PC-3 (cell line): ENCODE measurements at regions of chr19 and their contacts with region 1.

Region 1: DNA sequence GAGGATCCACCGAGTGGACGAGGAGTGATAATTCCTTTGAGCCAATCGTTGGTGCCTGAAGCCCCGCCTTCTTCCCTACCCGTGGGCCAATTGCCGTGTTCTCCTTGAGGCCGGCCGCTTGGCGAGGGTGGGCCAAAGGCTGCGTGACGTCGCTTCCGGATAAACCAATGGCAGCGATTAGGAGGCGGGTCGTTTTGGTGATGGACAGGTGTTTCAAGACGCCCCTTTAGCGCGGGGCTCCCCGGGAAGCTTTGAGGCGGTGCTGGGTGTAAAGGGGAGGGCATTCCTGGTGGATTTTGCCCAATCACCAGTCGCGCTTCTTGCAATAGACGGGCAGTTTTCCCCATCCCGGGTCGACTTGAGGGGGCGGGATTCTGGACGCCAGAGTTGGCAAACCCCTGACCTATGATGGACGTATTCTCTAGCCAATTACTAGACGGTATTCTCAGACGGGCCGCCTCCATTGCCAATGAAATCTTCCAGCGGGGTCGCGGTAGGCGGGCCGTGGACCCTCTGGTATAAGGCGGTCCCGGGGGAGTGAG is 310 bp upstream of the PRMT1 start:
- DNase-seq: peak; percentile 100
- ATAC-seq: peak; percentile 77
- H3K4me3 ChIP-seq: peak overlapping the region; percentile 86
- H3K27ac ChIP-seq: peak overlapping the region; percentile 80
- H3K4me1 ChIP-seq: peaks cover 25% of the 10 kb centered on the region
- H3K27me3 ChIP-seq: no peaks in the 10 kb centered on the region
- CTCF ChIP-seq: no peak

Region 2: GRCh38 chr19:49468746-49469447 is 207.9 kb before region 1 on chr19:
- CTCF ChIA-PET with region 1: no interaction called
- POLR2A ChIA-PET with region 1: no interaction called
- intact Hi-C with region 1: no loop called
- DNase-seq: peak; percentile 77
- ATAC-seq: peak; percentile 75
- H3K4me3 ChIP-seq: no peak overlapping the region
- H3K27ac ChIP-seq: no peak overlapping the region
- H3K4me1 ChIP-seq: no peaks in the 10 kb centered on the region
- H3K27me3 ChIP-seq: no peaks in the 10 kb centered on the region
- CTCF ChIP-seq: no peak

Region 3: DNA sequence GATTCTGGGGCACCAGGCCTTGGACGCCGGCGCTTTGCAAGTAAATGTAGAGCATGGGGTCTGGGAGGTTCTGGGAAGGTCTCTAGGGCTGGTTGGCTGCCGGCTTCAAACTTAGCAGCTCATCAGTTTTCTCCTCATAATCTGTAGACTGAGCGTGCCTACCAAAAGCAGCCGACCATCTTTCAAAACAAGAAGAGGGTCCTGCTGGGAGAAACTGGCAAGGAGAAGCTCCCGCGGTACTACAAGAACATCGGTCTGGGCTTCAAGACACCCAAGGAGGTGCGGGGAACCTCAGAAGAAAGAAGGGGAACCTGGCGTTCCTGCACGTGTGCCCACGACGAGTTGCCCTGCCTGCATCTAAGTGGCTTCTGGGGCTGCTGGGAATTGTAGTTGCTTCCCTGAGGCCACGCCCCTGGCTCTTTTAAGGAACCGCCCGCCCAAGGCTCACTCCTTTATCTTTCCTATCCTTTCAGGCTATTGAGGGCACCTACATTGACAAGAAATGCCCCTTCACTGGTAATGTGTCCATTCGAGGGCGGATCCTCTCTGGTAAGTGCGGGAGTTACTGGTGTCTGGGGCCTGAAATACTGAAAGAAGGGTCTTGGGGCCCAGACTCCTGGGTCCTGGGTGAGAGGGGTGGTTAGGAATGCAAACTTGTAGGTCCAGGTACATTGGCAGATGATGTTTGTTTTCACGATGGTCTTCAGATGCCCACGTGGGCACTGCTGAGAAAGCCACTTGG is 179.5 kb before region 1 on chr19:
- CTCF ChIA-PET with region 1: no interaction called
- POLR2A ChIA-PET with region 1: no interaction called
- intact Hi-C with region 1: loop called (anchors 5 kb)
- DNase-seq: peak; percentile 65
- ATAC-seq: no peak
- H3K4me3 ChIP-seq: peak overlapping the region; percentile 94
- H3K27ac ChIP-seq: peak overlapping the region; percentile 72
- H3K4me1 ChIP-seq: peaks cover 19% of the 10 kb centered on the region
- H3K27me3 ChIP-seq: no peaks in the 10 kb centered on the region
- CTCF ChIP-seq: no peak

Region 4: GRCh38 chr19:49590071-49590970 is 86.4 kb before region 1 on chr19:
- CTCF ChIA-PET with region 1: no interaction called
- POLR2A ChIA-PET with region 1: no interaction called
- intact Hi-C with region 1: loop called (anchors 2 kb)
- DNase-seq: peak; percentile 99
- ATAC-seq: peak; percentile 77
- H3K4me3 ChIP-seq: peak overlapping the region; percentile 70
- H3K27ac ChIP-seq: peak overlapping the region; percentile 85
- H3K4me1 ChIP-seq: peaks cover 7% of the 10 kb centered on the region; the same call in 1 of the 2 replicates
- H3K27me3 ChIP-seq: no peaks in the 10 kb centered on the region
- CTCF ChIP-seq: no peak

Region 5: DNA sequence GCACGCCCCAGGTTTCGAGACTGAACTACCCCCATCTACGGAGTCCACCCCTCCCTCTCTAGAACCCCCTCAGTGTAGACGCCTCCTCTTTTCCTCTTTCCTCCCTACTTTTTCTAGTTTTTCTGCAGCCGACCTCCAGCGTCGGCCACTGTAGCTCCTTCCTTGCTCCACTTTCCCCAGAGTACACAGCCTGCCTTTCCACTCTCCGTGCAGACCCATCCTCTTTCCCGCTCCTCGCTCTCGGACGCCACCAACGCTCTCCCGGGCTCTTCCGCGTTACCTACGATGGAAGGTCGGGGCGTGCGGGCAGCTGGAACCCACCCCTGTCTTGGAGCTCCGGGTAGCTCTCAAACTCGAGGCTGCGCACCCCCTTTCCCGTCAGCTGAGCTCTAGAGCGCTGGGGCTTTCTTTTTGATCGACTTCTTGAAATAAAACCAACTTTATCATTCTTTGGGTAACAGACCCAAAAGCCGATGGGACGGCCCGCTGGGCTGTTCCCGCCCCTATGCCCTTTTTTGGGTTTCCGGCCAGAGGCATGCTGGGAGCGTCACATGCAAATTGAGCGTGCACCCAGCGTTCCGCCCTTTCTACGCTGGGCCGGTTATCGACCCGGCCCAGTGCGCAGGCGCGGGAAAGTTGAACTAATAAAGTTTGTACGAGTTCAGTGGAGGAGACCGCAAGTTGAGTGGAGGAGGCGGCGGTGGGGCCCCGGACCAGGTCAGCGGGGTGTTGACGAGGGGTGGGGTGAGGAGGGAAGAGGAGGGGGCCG is 11.2 kb before region 1 on chr19 and contains the starts of genes BCL2L12 and IRF3:
- CTCF ChIA-PET with region 1: no interaction called
- POLR2A ChIA-PET with region 1: no interaction called
- intact Hi-C with region 1: loop called (anchors 1 kb)
- DNase-seq: peak; percentile 100
- ATAC-seq: peak; percentile 80
- H3K4me3 ChIP-seq: peak within 1 kb of the TSS; percentile 89
- H3K27ac ChIP-seq: peak within 1 kb of the TSS; percentile 60
- H3K4me1 ChIP-seq: peaks cover 18% of the 10 kb centered on the region
- H3K27me3 ChIP-seq: no peaks in the 10 kb centered on the region
- CTCF ChIP-seq: no peak
- total RNA-seq, gene BCL2L12: 82.5 and 104 TPM in 2 replicates
- total RNA-seq, gene IRF3: 223 and 236 TPM in 2 replicates

Region 6: DNA sequence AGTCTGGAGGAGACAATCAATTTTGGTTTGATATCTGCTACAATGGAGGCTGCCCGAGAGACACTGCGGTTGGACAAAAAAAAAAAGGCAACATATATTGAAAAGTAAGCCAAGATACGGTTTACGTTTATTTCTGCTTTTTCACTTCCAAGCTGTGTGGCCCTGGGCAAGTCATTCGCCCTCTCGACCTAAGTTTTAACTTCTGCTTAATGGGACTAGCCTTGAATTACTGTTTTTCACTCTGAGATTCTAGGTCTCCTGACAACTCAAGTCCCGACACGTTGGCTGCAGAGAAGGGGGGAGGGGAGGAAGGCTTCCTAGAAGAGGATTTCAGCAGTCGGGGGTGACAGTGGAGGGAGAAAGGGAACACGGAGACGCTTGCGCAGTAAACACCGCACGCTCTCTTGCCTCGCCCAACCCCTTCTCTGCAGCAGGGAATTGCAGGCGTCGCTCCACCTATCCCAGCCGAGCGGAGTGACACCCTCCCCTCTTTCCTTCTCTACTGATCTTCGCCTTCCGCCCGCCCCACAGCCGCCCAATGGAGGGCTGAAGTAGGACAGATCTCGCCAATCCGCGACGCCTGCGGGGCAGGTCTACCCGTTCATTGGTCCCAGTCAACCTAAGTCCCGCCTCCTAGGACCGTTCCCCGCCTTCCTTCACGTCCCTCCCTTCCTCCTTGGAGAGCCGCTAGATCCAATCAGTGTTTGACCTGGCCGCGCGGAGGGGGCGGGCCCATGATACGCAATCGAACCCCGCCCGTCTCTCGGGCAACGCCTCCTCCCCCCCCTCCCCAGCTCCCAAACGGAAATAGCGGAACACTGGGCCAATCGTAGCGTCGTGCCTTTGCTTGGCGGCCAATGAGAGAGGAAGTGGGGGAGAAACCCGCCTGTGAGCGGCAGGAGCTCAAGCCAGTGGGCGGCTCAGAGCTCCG is 89.5 kb after region 1 on chr19:
- CTCF ChIA-PET with region 1: no interaction called
- POLR2A ChIA-PET with region 1: interaction called, 10 read pairs
- intact Hi-C with region 1: loop called (anchors 1 kb)
- DNase-seq: peak; percentile 100
- ATAC-seq: peak; percentile 91
- H3K4me3 ChIP-seq: peak overlapping the region; percentile 62
- H3K27ac ChIP-seq: peak overlapping the region; percentile 90
- H3K4me1 ChIP-seq: peaks cover 23% of the 10 kb centered on the region
- H3K27me3 ChIP-seq: no peaks in the 10 kb centered on the region
- CTCF ChIP-seq: no peak

Region 7: DNA sequence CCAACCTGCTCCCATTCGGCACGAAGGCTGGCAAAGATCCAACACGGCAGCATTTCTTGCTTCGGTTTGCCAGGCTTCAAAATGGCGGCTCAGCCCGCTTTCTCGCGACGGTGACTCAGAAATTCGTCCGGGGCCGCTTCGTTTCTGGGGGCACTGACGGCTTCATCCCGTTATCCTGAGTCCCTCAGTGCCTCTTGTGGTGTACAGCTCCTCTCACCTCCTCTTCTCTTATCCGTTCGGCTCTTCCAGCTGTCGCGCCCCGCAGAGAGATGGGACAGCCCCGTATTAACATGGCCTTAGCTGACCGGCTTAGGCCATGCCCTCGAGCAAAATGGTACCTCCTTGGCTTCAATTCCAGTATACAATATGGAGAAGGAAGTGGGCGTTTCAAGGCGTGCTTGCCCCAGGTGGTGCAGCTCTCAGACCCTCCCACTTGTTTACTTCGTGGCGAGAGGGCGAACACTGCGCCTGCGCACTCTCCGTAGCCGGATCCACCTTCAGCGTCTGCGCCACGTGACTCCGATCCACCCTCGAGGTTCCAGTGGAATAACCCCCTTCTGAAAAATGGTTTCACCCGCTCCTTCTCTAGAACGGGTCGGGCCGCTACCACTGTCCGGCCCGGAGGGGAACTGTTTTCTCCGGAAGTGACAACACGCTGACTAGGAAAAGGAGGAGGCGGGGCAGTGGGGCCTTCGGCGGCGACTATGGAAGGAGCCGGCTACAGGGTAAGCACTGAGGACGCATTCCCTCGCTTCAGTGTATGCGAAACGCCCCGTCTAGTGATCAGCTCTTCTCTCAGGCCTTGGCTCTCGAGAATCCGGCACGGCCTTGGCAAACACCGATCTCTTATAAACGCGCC is 200.5 kb after region 1 on chr19 and contains the starts of genes AKT1S1 and TBC1D17:
- CTCF ChIA-PET with region 1: no interaction called
- POLR2A ChIA-PET with region 1: no interaction called
- intact Hi-C with region 1: loop called (anchors 5 kb)
- DNase-seq: peak; percentile 100
- ATAC-seq: peak; percentile 65
- H3K4me3 ChIP-seq: peak within 1 kb of the TSS; percentile 93
- H3K27ac ChIP-seq: peak within 1 kb of the TSS; percentile 91
- H3K4me1 ChIP-seq: peaks cover 26% of the 10 kb centered on the region
- H3K27me3 ChIP-seq: no peaks in the 10 kb centered on the region
- CTCF ChIP-seq: no peak
- total RNA-seq, gene AKT1S1: 42.3 and 61.0 TPM in 2 replicates
- total RNA-seq, gene TBC1D17: 17.8 and 18.8 TPM in 2 replicates